Transverse colon (tissue), 4 donors: ENCODE measurements at regions of chr3 and their contacts with region 1.

Region 1: GRCh38 chr3:12556671-12557472 is at the start of gene MKRN2:
- DNase-seq: peak; percentile 91
- H3K4me3 ChIP-seq: peak within 1 kb of the TSS; percentile 79 to 93 (median 89)
- H3K27ac ChIP-seq: peak within 1 kb of the TSS; percentile 97 to 99 (median 98)
- H3K4me1 ChIP-seq: peaks cover 13 to 45% (median 30%) of the 10 kb centered on the region in 4 donors
- H3K27me3 ChIP-seq: peaks cover 34% of the 10 kb centered on the region
- CTCF ChIP-seq: no peak
- EP300 ChIP-seq: no peak
- POLR2A ChIP-seq: peak; percentile 96
- total RNA-seq, gene MKRN2: 22.9 to 30.6 (median 25.4) TPM

Region 2: DNA sequence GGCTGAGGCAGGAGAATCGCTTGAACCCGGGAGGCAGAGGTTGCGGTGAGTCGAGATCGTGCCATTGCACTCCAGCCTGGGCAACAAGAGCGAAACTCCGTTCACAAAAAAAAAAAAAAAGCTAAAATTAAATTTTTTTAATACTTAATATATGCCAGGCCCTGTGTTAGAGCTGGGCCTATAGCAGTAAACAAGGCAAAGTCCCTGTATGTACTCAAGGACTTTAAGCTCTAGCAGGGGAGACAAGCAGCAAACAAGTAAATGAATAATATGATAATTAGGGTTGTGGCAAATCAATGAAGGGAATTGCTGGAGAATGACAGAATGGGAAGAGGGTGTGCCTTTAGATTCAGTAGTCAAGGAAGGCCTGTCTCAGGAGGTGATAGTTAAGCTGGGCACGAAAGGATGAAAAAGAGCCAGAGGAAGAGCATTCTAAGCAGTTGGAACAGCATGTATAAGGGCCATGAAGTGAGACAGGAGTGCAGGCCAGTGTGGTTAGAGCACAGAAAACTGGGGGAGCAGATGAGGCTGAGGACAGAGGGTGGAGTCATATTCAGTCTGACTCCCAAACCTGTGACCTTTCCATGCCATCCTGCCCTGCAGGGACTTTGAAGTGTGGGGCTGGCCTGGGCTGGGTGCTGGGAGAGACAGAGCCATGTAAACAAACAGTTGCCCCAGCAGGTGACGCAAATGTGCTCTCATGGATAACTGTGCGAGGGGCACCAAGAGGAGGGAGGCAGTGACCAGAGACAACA is 113.7 kb after region 1 on chr3:
- in situ Hi-C with region 1: no loop called
- intact Hi-C with region 1: no loop called
- DNase-seq: no peak
- H3K4me3 ChIP-seq: no peak overlapping the region
- H3K27ac ChIP-seq: no peak overlapping the region
- H3K4me1 ChIP-seq: no peaks in the 10 kb centered on the region
- H3K27me3 ChIP-seq: no peaks in the 10 kb centered on the region
- CTCF ChIP-seq: no peak
- EP300 ChIP-seq: no peak
- POLR2A ChIP-seq: no peak

Region 3: DNA sequence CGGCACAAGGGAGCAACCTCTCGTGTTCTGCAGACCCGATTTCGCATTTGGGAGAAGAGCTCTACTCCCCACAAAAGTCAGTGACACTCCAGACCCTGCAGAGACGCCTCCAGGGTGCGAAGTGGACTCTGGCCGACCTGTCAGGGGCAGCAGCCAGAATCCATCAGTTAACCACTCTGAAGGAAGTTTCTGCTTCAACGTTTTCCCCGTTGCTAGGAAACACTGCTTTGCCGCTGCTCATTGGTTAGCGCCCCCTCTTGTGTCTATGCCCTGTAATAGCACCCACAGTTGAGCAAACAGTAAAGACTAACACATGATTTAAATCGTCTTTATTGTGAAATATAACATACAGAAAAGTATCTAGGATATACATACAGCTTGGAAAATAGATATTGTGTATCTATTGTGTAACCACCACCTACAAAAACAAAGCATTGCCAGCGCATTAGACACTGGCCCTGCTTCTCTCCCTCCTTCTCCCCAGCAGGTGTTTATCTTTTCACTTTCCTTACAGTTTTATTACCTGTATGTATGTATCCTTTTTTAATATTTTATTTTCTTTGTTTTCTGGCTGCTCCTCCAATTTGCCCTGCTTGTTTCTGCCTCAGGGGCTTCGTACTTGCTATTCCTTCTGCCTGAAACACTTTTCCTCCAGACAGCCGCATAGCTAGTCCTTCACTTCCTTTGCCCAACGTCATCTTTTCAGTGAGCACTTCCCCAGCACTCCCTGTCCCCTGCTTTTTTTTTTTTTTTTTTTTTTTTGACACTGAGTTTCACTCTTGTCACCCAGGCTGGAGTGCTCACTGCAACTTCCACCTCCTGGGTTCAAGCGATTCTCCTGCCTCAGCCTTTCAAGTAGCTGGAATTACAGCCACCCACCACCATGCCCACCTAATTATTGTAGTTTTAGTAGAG is 163.4 kb after region 1 on chr3:
- in situ Hi-C with region 1: loop called in 1 of 4 experiments (anchors 25 kb)
- intact Hi-C with region 1: no loop called
- DNase-seq: peak; percentile 78
- H3K4me3 ChIP-seq: peak overlapping the region in 1 of 4 donors; percentile 42
- H3K27ac ChIP-seq: peak overlapping the region in 1 of 4 donors; percentile 12
- H3K4me1 ChIP-seq: peaks cover 0 to 15% (median 4%) of the 10 kb centered on the region in 4 donors
- H3K27me3 ChIP-seq: no peaks in the 10 kb centered on the region
- CTCF ChIP-seq: peak; percentile 86 to 92 (median 89)
- EP300 ChIP-seq: no peak
- POLR2A ChIP-seq: no peak

Region 4: DNA sequence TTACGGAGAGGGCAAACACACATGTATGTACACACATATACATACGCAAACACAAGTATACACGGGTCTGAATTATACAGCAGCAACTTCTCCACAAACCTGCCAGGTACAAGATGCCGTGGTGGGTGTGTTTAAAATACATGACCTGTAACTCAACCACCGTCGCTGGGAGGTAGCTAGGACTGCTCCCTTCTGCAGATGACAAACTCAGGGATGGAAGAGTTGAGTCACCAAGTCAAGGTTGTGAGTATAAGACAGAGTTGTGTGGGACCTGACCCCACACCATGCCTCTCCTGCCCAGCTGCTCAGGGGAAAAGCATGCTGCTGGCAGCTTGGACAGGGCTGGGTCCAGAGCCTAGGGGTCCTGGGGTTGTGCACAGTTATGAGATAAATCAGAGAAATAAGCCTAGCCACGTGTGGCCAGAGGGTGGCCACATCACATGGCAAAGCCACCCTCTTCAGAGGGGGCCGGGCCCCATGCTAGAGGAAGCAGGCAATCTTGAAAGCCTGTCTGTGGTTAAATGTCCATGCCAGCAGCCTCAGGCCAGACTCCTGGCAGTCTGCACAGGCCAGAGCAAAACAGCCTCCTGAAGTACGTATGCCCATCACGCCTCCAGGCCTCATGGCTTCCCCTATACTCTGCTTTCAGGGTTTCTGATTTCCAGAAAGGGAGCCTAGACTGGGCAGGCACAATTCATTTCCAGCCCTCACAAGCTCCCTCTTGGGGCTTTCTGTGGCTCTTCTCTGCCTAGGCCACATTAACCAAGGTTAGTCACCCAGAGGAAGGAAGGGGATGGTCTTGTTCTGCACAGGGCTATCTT is 392.2 kb after region 1 on chr3:
- in situ Hi-C with region 1: no loop called
- intact Hi-C with region 1: no loop called
- DNase-seq: peak; percentile 24
- H3K4me3 ChIP-seq: no peak overlapping the region
- H3K27ac ChIP-seq: no peak overlapping the region
- H3K4me1 ChIP-seq: peaks cover 13 to 35% (median 24%) of the 10 kb centered on the region in 4 donors
- H3K27me3 ChIP-seq: no peaks in the 10 kb centered on the region
- CTCF ChIP-seq: no peak
- EP300 ChIP-seq: no peak
- POLR2A ChIP-seq: no peak